ENCODE measurements at regions of chr6 and their contacts with region 1.

Region 1: GRCh38 chr6:41895300-41896233 is at the start of gene USP49:
- DNase-seq: peak; percentile 92
- H3K4me3 ChIP-seq: peak within 1 kb of the TSS; percentile 88
- H3K27ac ChIP-seq: peak within 1 kb of the TSS; percentile 83
- H3K4me1 ChIP-seq: peaks cover 29% of the 10 kb centered on the region
- CTCF ChIP-seq: no peak
- total RNA-seq, gene USP49: 7.4 and 9.0 TPM in 2 replicates

Region 2: DNA sequence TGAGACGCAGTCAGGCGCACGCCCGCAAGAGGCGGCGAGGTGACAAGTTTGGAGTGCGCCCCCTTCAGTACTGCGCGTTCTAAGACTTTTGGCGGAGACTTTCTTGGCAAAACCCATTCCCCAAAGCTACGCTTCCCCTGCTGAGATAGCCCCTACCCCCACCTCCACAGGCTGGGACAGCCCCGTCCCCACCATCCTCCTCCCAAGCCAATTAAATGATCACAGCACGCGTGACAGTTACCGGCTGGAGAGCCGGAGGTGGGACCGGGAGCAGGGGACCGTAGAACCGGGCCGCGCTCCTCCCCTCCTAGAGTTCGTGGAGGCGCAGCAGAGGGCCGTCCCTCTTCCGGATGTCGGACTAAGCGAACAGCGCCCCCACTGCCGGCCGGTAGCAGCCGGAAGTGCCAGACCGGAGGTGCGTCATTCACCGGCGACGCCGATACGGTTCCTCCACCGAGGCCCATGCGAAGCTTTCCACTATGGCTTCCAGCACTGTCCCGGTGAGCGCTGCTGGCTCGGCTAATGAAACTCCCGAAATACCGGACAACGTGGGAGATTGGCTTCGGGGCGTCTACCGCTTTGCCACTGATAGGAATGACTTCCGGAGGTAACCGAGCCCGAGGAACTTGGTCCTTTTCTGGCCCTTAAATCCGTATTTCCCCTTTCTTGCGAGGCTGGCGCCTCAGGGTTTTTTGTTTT is 108.2 kb before region 1 on chr6 and contains the start of gene TOMM6:
- CTCF ChIA-PET with region 1: no interaction called
- POLR2A ChIA-PET with region 1: no interaction called
- intact Hi-C with region 1: loop called (anchors 1 kb)
- DNase-seq: peak; percentile 97
- H3K4me3 ChIP-seq: peak within 1 kb of the TSS; percentile 86
- H3K27ac ChIP-seq: peak within 1 kb of the TSS; percentile 81
- H3K4me1 ChIP-seq: peaks cover 39% of the 10 kb centered on the region
- CTCF ChIP-seq: peak; percentile 81
- total RNA-seq, gene TOMM6: 84.9 and 131 TPM in 2 replicates

Region 3: GRCh38 chr6:41836022-41836659 is 59.4 kb before region 1 on chr6:
- CTCF ChIA-PET with region 1: no interaction called
- POLR2A ChIA-PET with region 1: no interaction called
- intact Hi-C with region 1: no loop called
- DNase-seq: no peak
- H3K4me3 ChIP-seq: no peak overlapping the region
- H3K27ac ChIP-seq: no peak overlapping the region
- H3K4me1 ChIP-seq: no peaks in the 10 kb centered on the region
- CTCF ChIP-seq: no peak

Region 4: DNA sequence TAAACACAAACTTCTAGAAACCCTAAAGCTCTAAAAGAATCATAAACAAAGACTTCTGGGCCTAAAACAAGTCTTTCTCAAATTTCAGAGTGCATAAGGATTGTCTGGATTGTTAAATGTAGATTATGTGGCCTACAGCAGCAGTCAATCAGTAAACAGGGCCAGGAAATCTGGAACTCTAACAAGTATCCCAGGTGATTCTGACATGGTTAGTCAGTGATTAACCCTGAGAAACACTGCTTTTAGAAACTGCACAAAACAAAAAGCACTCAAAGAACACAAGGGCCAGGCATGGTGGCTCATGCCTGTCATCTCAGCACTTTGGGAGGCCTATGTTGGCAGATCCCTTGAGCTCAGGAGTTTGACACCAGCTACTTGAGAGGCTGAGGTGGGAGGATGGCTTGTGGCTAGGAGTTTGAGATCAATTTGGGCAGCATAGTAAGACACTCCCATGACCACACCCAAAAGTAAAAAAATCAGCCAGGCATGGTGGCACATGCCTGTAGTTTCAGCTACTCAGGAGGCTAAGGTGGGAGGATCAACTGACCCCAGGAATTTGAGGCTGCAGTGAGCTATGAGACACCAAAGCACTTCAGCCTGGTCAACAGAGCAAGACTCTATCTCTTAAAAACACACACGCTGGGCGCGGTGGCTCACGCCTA is 19.4 kb after region 1 on chr6:
- CTCF ChIA-PET with region 1: no interaction called
- POLR2A ChIA-PET with region 1: interaction called, 15 read pairs
- intact Hi-C with region 1: loop called (anchors 2 kb)
- DNase-seq: no peak
- H3K4me3 ChIP-seq: no peak overlapping the region
- H3K27ac ChIP-seq: no peak overlapping the region
- H3K4me1 ChIP-seq: peaks cover 10% of the 10 kb centered on the region
- CTCF ChIP-seq: no peak

Region 5: GRCh38 chr6:42050266-42051032 is 154.9 kb after region 1 on chr6 and contains the start of gene TAF8:
- CTCF ChIA-PET with region 1: no interaction called
- POLR2A ChIA-PET with region 1: interaction called, 10 read pairs
- intact Hi-C with region 1: no loop called
- DNase-seq: peak; percentile 97
- H3K4me3 ChIP-seq: peak within 1 kb of the TSS; percentile 82
- H3K27ac ChIP-seq: peak within 1 kb of the TSS; percentile 74
- H3K4me1 ChIP-seq: peaks cover 47% of the 10 kb centered on the region
- CTCF ChIP-seq: no peak
- total RNA-seq, gene TAF8: 33.2 and 35.1 TPM in 2 replicates

Measured in OCI-LY7 (cell line).